CD4-positive, alpha-beta memory T cell (primary cell): ENCODE measurements at regions of chr2 and their contacts with region 1.

Region 1: DNA sequence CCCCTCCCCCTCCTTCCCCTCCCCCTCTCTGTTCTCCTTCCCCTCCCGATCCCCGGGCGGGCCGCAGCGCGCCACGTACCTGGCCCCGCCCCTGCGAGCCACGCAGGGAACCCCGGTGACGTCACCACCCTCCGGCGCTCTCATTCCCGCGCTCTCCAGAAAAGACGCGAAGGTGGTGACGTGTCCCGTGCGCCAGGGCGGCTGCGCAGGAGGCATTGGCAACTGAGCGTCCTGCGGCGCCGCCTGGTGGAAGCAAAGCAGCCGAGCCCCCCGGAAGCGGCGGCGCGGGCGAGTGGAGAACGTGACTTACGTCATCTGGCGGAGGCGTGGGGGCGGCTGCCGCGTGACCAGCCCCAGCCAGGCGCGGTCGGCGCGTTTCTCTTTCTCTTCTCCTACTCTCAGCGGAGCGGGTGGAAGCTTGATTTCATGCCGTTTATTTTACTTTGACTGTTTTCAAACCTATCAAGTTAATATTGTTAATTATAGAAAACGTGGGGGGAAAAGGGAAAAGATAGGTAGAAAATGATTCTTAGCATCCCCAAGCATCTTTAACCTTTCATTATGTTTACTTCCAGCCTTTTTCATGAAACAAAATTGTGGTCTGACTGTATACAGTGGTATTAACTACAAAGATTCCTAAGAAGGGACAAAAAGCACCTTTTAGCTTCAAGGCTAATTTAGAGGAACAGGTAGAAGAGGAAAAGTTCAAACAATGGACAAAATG is 48.1 kb downstream of the C2orf42 start:
- DNase-seq: peak; percentile 99 to 100 (median 100)
- H3K4me3 ChIP-seq: peak overlapping the region in 1 of 2 donors; percentile 67
- H3K4me3 Mint-ChIP-seq: peak overlapping the region; percentile 85 to 96 (median 90)
- H3K27ac ChIP-seq: peak overlapping the region; percentile 97
- H3K27ac Mint-ChIP-seq: peak overlapping the region; percentile 97 to 100 (median 100)
- H3K4me1 ChIP-seq: peaks cover 56% of the 10 kb centered on the region
- H3K4me1 Mint-ChIP-seq: peaks cover 38 to 67% (median 52%) of the 10 kb centered on the region in 4 donors
- H3K27me3 ChIP-seq: no peaks in the 10 kb centered on the region
- H3K27me3 Mint-ChIP-seq: peaks cover 0 to 2% of the 10 kb centered on the region in 2 donors

Region 2: GRCh38 chr2:69829256-69830046 is 313.3 kb before region 1 on chr2 and contains the start of gene GMCL1:
- CTCF ChIA-PET with region 1: no interaction called
- POLR2A ChIA-PET with region 1: interaction called, 4 read pairs
- intact Hi-C with region 1: loop called (anchors 1 kb)
- DNase-seq: peak; percentile 98 to 99 (median 99)
- H3K4me3 ChIP-seq: peak within 1 kb of the TSS; percentile 54 to 71
- H3K4me3 Mint-ChIP-seq: peak within 1 kb of the TSS; percentile 87 to 98 (median 96)
- H3K27ac ChIP-seq: peak within 1 kb of the TSS; percentile 92
- H3K27ac Mint-ChIP-seq: peak within 1 kb of the TSS; percentile 93 to 98 (median 96)
- H3K4me1 ChIP-seq: peaks cover 42% of the 10 kb centered on the region
- H3K4me1 Mint-ChIP-seq: peaks cover 21 to 69% (median 43%) of the 10 kb centered on the region in 4 donors
- H3K27me3 ChIP-seq: no peaks in the 10 kb centered on the region
- H3K27me3 Mint-ChIP-seq: no peaks in the 10 kb centered on the region
- total RNA-seq, gene GMCL1: 28.2 to 31.8 TPM

Region 3: DNA sequence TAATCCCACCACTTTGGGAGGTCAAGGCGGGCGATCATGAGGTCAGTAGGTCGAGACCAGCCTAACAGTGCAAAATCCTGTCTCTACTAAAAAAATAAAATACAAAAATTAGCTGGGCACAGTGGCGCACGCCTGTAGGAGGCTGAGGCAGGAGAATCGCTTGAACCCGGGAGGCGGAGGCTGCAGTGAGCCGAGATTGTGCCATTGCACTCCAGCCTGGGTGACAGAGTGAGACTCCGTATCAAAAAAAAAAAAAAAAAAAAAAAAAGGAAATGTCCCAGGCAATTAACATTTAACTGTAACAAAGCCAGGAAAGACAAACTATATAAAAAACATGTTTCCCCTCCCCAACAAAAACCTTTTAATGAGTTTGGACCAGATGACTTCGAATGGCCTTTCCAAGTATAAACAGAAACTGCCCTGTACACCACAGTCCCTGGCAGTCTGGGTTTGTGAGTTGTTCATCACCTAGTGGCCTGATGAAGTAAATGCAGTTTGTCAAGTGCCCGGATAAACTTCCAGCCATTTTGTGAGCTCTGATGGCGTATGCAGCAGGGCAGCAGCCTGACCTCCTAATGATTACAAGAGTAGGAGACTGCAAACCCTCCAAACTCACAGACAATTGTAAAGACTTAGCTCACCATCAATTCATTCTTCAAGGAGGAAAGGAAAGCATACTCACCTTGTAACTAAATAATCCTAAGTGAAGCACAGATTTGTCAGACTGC is 72.0 kb before region 1 on chr2:
- CTCF ChIA-PET with region 1: interaction called, 24 read pairs
- POLR2A ChIA-PET with region 1: interaction called, 2,231 read pairs
- intact Hi-C with region 1: loop called (anchors 1 kb)
- DNase-seq: peak; percentile 75 to 81 (median 79)
- H3K4me3 ChIP-seq: peak overlapping the region in 1 of 2 donors; percentile 1
- H3K4me3 Mint-ChIP-seq: peak overlapping the region; percentile 67 to 91 (median 80)
- H3K27ac ChIP-seq: peak overlapping the region; percentile 82
- H3K27ac Mint-ChIP-seq: peak overlapping the region; percentile 81 to 99 (median 98)
- H3K4me1 ChIP-seq: peaks cover 39% of the 10 kb centered on the region
- H3K4me1 Mint-ChIP-seq: peaks cover 36 to 55% (median 46%) of the 10 kb centered on the region in 4 donors
- H3K27me3 ChIP-seq: no peaks in the 10 kb centered on the region
- H3K27me3 Mint-ChIP-seq: no peaks in the 10 kb centered on the region

Region 4: DNA sequence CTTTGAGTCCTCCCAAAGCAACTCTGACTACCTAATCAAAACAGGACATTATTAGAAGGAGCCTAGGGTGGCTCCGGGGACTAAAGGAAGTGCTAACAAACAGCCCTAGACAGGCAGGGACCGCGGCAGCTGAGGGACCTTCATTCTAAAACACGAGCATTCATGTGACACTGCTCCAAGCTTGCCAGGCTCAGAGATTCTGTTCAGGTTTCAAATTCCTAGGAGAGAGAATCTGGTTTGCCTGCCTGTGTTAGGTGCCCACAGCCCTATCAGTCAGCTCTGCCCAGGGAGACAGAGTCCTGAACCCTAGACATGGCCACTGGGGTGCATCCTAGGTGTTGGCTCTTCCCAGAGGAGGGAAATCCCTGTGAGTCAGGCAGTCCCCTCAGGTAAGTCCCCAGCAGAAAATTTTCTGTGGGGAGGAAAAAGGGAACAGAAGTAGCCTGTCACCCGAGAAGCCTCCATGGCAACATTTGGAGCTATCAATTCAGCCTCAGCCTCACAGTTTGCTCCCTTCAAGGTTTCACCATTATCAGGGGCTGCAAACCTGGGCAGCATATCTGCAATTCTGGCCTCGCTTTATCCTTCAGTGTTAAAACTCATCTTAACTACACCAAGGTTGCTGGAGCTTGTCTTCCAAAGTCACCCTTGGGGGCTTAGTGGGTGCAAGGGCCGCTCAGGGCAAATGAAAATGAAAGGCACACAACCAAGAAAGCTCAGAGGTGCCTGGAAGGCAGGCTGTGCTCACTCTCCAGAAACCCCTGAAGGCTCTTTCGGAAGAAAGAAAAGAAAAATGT is 26.9 kb before region 1 on chr2:
- CTCF ChIA-PET with region 1: interaction called, 3 read pairs
- POLR2A ChIA-PET with region 1: interaction called, 719 read pairs
- intact Hi-C with region 1: no loop called
- DNase-seq: no peak
- H3K4me3 ChIP-seq: no peak overlapping the region
- H3K4me3 Mint-ChIP-seq: no peak overlapping the region
- H3K27ac ChIP-seq: no peak overlapping the region
- H3K27ac Mint-ChIP-seq: peak overlapping the region in 1 of 7 donors; percentile 4
- H3K4me1 ChIP-seq: peaks cover 40% of the 10 kb centered on the region
- H3K4me1 Mint-ChIP-seq: peaks cover 21 to 37% (median 28%) of the 10 kb centered on the region in 4 donors
- H3K27me3 ChIP-seq: no peaks in the 10 kb centered on the region
- H3K27me3 Mint-ChIP-seq: no peaks in the 10 kb centered on the region

Region 5: DNA sequence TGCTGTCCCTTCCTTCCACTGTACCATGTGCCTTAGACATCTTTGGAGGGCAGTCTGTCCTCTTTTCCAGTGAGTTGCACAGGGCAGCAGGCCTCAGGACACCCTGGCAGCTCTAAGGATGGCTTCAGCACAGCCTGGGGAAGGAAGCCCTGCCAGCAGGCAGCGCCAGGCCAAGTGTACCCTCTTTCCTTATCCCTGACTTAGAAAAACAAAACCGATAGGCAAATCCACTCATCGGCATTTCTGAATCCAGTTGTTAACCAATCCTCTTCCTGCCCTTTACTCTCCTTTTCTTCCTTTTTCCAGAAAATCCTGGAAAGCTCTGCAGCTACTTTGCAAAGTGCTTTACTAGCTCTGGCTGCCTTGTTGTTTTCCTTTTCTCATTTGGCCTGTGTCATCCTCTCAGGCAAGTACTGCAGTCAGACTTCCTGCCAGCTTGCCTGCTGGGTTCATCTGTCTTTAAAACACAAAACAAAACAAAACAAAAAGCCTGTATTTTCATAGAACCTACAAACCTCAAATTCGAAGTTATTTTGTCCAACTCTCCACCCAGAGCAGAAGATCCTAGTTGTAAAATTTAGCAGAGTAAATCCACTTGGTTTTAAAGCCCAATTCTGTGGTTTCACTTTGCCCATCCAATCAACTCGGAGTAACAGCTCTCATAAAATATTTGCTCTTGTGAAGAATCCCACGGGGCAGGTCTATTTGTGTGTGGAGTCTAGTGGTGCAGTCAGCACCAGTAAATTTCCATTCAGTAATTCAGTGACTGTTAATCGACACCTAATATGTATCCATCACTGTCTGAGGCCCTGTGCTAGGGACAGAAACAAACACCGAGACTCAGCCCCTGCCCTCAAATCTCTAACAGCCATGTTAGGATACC is 10.3 kb before region 1 on chr2:
- CTCF ChIA-PET with region 1: interaction called, 101 read pairs
- POLR2A ChIA-PET with region 1: interaction called, 719 read pairs
- intact Hi-C with region 1: loop called (anchors 1 kb)
- DNase-seq: peak; percentile 52 to 72 (median 63)
- H3K4me3 ChIP-seq: peak overlapping the region; percentile 24 to 55
- H3K4me3 Mint-ChIP-seq: peak overlapping the region; percentile 81 to 92 (median 86)
- H3K27ac ChIP-seq: peak overlapping the region; percentile 83
- H3K27ac Mint-ChIP-seq: peak overlapping the region; percentile 92 to 100 (median 97)
- H3K4me1 ChIP-seq: peaks cover 87% of the 10 kb centered on the region
- H3K4me1 Mint-ChIP-seq: peaks cover 54 to 88% (median 66%) of the 10 kb centered on the region in 4 donors
- H3K27me3 ChIP-seq: no peaks in the 10 kb centered on the region
- H3K27me3 Mint-ChIP-seq: no peaks in the 10 kb centered on the region

Region 6: GRCh38 chr2:70204452-70204851 is 61.7 kb after region 1 on chr2:
- CTCF ChIA-PET with region 1: no interaction called
- POLR2A ChIA-PET with region 1: no interaction called
- intact Hi-C with region 1: no loop called
- DNase-seq: no peak
- H3K4me3 ChIP-seq: no peak overlapping the region
- H3K4me3 Mint-ChIP-seq: no peak overlapping the region
- H3K27ac ChIP-seq: no peak overlapping the region
- H3K27ac Mint-ChIP-seq: no peak overlapping the region
- H3K4me1 ChIP-seq: no peaks in the 10 kb centered on the region
- H3K4me1 Mint-ChIP-seq: no peaks in the 10 kb centered on the region
- H3K27me3 ChIP-seq: no peaks in the 10 kb centered on the region
- H3K27me3 Mint-ChIP-seq: no peaks in the 10 kb centered on the region

Region 7: GRCh38 chr2:70258532-70258874 is 115.8 kb after region 1 on chr2:
- CTCF ChIA-PET with region 1: no interaction called
- POLR2A ChIA-PET with region 1: interaction called, 18 read pairs
- intact Hi-C with region 1: no loop called
- DNase-seq: peak in 1 of 5 donors; percentile 39
- H3K4me3 ChIP-seq: peak overlapping the region; percentile 10 to 79
- H3K4me3 Mint-ChIP-seq: peak overlapping the region; percentile 87 to 97 (median 93)
- H3K27ac ChIP-seq: peak overlapping the region; percentile 57
- H3K27ac Mint-ChIP-seq: peak overlapping the region; percentile 8 to 86 (median 69)
- H3K4me1 ChIP-seq: peaks cover 17% of the 10 kb centered on the region
- H3K4me1 Mint-ChIP-seq: peaks cover 26 to 48% (median 36%) of the 10 kb centered on the region in 4 donors
- H3K27me3 ChIP-seq: no peaks in the 10 kb centered on the region
- H3K27me3 Mint-ChIP-seq: no peaks in the 10 kb centered on the region